CD4-positive, alpha-beta memory T cell (primary cell): ENCODE measurements at regions of chr7 and their contacts with region 1.

Region 1: DNA sequence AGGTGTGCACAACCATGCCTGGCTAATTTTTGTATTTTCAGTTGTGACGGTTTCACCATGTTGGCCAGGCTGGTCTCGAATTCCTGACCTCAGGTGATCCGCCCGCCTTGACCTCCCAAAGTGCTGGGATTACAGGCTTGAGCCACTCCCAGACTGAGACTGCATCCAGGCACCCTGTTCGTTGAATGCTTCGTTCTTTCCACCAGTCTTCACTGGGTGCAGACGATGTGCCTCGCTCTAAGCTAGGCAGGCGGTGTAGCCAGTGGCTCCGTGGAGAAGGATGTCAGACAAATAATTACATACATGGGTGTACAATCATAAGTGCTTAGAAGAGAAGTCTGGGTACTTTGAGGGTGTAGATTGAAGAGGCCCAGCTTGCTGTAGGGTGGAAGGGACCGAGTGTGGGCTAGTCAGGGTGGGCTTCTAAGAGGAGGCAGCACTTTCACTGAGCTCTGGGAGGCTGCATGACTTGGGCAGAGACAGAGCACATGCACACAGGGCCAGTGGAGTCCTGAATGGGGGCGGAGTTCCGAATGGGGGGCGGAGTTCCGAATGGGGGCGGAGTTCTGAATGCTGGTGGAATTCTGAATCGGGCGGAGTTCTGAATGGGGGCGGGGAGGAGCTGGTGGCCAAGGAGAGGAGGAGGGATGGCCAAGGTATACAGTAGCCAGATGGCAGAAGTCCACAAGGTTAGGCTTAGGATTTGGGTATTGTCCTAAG is 74.3 kb downstream of the COL26A1 start:
- DNase-seq: no peak
- H3K4me3 ChIP-seq: no peak overlapping the region
- H3K4me3 Mint-ChIP-seq: no peak overlapping the region
- H3K27ac ChIP-seq: no peak overlapping the region
- H3K27ac Mint-ChIP-seq: no peak overlapping the region
- H3K4me1 ChIP-seq: no peaks in the 10 kb centered on the region
- H3K4me1 Mint-ChIP-seq: no peaks in the 10 kb centered on the region
- H3K27me3 ChIP-seq: no peaks in the 10 kb centered on the region
- H3K27me3 Mint-ChIP-seq: peaks cover 13 to 20% of the 10 kb centered on the region in 2 donors

Region 2: GRCh38 chr7:101169838-101170551 is 267.0 kb before region 1 on chr7:
- CTCF ChIA-PET with region 1: no interaction called
- POLR2A ChIA-PET with region 1: no interaction called
- intact Hi-C with region 1: no loop called
- DNase-seq: peak; percentile 70 to 80 (median 75)
- H3K4me3 ChIP-seq: no peak overlapping the region
- H3K4me3 Mint-ChIP-seq: peak overlapping the region in 7 of 8 donors; percentile 1 to 79 (median 64)
- H3K27ac ChIP-seq: no peak overlapping the region
- H3K27ac Mint-ChIP-seq: peak overlapping the region in 5 of 7 donors; percentile 7 to 77 (median 36)
- H3K4me1 ChIP-seq: peaks cover 75% of the 10 kb centered on the region
- H3K4me1 Mint-ChIP-seq: peaks cover 40 to 81% (median 61%) of the 10 kb centered on the region in 4 donors
- H3K27me3 ChIP-seq: peaks cover 88% of the 10 kb centered on the region
- H3K27me3 Mint-ChIP-seq: peaks cover 61 to 72% of the 10 kb centered on the region in 2 donors

Region 3: DNA sequence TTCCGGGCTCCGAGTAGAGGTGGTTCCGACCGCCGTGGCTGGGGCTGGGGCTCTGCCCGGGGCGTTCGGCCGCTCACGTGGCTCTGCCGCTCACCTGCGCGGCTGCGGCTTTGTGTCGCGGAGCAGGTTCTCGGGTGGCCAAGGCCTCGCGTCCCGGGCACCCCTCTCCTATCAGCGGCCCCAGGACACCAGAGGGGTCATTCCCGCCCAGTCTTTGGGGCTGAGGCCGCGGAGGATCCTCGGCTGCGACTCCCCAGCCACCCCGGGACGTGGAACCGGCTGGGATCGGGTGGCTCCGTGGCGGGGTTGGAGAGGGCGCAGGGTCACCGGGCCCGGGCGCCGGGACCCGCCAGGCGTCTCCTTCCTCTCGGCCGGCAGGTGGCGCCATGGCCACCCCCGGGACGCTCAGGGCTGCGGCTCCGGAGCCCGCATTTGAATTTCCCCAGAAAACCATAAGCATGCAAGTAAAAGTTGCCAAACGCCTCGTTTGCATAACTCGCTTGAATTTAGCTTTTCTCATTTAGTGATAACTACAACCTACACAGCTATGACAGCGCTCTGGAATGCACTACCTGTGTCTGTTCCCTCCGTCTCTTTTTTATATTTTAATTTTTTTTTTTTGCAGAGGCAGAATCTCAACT is 73.2 kb before region 1 on chr7:
- CTCF ChIA-PET with region 1: interaction called, 16 read pairs
- POLR2A ChIA-PET with region 1: no interaction called
- intact Hi-C with region 1: no loop called
- DNase-seq: peak; percentile 54 to 69 (median 63)
- H3K4me3 ChIP-seq: peak overlapping the region in 1 of 2 donors; percentile 28
- H3K4me3 Mint-ChIP-seq: peak overlapping the region in 6 of 8 donors; percentile 39 to 54 (median 43)
- H3K27ac ChIP-seq: no peak overlapping the region
- H3K27ac Mint-ChIP-seq: no peak overlapping the region
- H3K4me1 ChIP-seq: peaks cover 6% of the 10 kb centered on the region
- H3K4me1 Mint-ChIP-seq: peaks cover 0 to 5% (median 0%) of the 10 kb centered on the region in 4 donors
- H3K27me3 ChIP-seq: peaks cover 13% of the 10 kb centered on the region
- H3K27me3 Mint-ChIP-seq: peaks cover 18 to 25% of the 10 kb centered on the region in 2 donors